Body of pancreas (tissue), 4 donors: ENCODE measurements at regions of chr1 and their contacts with region 1.

Region 1: GRCh38 chr1:180252638-180253536 is 22.8 kb downstream of the LHX4 start:
- DNase-seq: peak; percentile 68 to 75 (median 70)
- ATAC-seq: peak; percentile 34
- H3K4me3 ChIP-seq: no peak overlapping the region
- H3K27ac ChIP-seq: no peak overlapping the region
- H3K4me1 ChIP-seq: peaks cover 21% of the 10 kb centered on the region
- H3K27me3 ChIP-seq: no peaks in the 10 kb centered on the region
- CTCF ChIP-seq: peak; percentile 28 to 86 (median 67)
- POLR2A ChIP-seq: no peak

Region 2: GRCh38 chr1:180482425-180483275 is 229.8 kb after region 1 on chr1:
- intact Hi-C with region 1: loop called (anchors 10 kb)
- DNase-seq: peak in 1 of 4 donors; percentile 42
- ATAC-seq: no peak
- H3K4me3 ChIP-seq: no peak overlapping the region
- H3K27ac ChIP-seq: no peak overlapping the region
- H3K4me1 ChIP-seq: no peaks in the 10 kb centered on the region
- H3K27me3 ChIP-seq: no peaks in the 10 kb centered on the region
- CTCF ChIP-seq: peak; percentile 48 to 77 (median 58)
- POLR2A ChIP-seq: no peak